ENCODE measurements at regions of chr9 and their contacts with region 1.

Region 1: GRCh38 chr9:94672811-94673487 is 33.6 kb upstream of the FBP1 start:
- DNase-seq: no peak
- H3K4me3 ChIP-seq: no peak overlapping the region
- H3K27ac ChIP-seq: no peak overlapping the region
- H3K4me1 ChIP-seq: peaks cover 12 to 15% of the 10 kb centered on the region in 2 donors
- H3K27me3 ChIP-seq: no peaks in the 10 kb centered on the region
- CTCF ChIP-seq: no peak
- POLR2A ChIP-seq: no peak

Region 2: DNA sequence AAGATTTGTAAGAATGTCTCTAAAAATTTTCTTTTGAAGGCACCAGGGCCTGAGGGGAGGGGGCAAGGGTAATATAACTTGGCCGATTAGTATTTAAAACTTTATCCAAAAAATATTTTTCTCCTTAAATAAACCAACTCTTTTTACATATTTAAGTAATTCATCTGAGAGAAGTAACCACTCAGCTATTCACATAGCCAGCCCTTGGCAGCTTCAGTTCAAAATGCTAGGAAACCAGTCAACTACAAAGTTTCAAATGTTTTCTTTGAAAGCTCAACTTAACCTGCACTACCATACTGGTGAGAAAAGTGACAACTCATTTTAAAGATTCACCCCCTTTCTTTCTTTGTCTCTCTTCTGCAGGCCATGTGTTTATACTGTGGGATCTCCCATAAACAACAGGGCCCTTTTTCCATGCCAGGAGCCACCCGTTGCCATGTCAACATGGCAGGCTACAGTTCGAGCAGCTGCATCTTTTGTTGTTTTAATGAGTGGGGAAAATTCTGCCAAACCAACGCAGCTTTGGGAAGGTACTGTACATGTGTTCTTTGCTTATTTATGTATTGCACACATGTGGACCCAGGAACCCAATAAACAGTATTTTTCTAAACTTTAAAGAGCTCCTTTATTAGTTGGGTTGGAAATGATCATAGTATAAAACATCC is 99.8 kb after region 1 on chr9:
- intact Hi-C with region 1: loop called (anchors 10 kb)
- DNase-seq: peak in 1 of 2 donors; percentile 36
- H3K4me3 ChIP-seq: no peak overlapping the region
- H3K27ac ChIP-seq: peak overlapping the region in 2 of 3 donors; percentile 34 to 47
- H3K4me1 ChIP-seq: peaks cover 12 to 20% of the 10 kb centered on the region in 2 donors
- H3K27me3 ChIP-seq: no peaks in the 10 kb centered on the region
- CTCF ChIP-seq: no peak
- POLR2A ChIP-seq: no peak

Measured in thyroid gland (tissue), 4 donors.